ENCODE measurements at regions of chr3 and their contacts with region 1.

Region 1: DNA sequence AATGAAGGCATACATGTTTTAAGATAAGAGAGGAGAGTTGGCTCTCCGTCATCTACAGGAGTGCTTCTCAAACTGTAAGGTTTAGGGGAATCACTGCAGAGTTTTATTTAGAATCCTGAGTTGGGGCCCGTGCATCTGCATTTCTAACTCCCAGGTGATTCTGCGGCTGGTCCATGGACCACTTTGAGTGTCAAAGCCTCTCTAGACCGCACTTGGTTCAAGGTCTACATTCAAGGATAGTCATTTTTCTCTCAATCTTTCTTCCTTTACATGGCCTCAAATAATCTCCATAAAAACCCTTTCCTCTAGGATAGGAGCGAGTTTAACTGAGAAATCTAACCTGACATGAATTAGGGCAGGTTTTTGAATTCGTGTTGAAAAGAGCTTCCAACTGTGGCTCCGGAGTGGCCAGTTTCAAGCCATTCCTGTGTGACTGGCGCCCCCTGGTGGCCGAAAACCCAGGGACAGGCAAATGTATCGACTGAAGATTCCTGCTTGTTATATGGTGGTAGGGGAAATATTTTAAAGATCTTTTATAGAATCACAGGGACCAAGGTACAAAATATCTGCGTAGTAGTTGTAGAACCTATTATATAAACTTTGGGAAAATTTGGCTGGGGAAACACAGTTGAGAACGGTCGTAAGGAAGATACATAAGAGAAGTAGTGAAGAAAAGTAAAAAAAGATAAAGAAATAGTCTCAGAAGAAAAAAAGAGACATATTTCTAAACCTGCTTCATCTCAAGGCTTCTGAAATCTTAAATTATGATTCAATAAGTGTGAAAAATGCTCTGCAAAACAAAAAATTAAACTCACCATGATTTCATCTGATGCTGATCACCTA is 11.9 kb downstream of the GABRR3 start:
- DNase-seq: peak; percentile 96
- ATAC-seq: peak; percentile 89
- H3K4me3 Mint-ChIP-seq: no peak overlapping the region
- H3K27ac Mint-ChIP-seq: no peak overlapping the region
- H3K4me1 Mint-ChIP-seq: peaks cover 1% of the 10 kb centered on the region
- H3K27me3 Mint-ChIP-seq: peaks cover 3% of the 10 kb centered on the region
- CTCF ChIP-seq: peak; percentile 91

Region 2: DNA sequence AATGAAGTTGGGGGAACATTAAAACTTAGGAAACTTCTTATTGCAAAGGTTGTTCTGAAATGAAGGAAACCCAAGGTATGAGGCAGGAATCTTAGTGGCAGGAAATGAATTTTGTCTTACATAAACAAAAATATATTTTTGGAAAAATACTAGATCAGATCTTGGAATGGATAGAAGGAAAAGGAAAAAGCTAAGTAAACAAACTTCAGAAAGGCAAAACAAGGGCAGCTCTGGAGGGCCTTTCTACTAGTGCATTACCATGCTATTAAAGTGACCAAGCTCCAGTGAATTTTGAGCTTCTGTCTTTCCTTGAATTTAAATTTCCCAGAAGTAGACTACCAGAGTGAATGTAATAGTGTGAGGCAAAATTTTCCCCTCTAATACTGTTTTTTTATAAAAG is 245.0 kb before region 1 on chr3:
- CTCF ChIA-PET with region 1: interaction called, 3 read pairs
- POLR2A ChIA-PET with region 1: no interaction called
- intact Hi-C with region 1: loop called (anchors 5 kb)
- DNase-seq: no peak
- ATAC-seq: no peak
- H3K4me3 Mint-ChIP-seq: no peak overlapping the region
- H3K27ac Mint-ChIP-seq: no peak overlapping the region
- H3K4me1 Mint-ChIP-seq: no peaks in the 10 kb centered on the region
- H3K27me3 Mint-ChIP-seq: no peaks in the 10 kb centered on the region
- CTCF ChIP-seq: no peak

Region 3: DNA sequence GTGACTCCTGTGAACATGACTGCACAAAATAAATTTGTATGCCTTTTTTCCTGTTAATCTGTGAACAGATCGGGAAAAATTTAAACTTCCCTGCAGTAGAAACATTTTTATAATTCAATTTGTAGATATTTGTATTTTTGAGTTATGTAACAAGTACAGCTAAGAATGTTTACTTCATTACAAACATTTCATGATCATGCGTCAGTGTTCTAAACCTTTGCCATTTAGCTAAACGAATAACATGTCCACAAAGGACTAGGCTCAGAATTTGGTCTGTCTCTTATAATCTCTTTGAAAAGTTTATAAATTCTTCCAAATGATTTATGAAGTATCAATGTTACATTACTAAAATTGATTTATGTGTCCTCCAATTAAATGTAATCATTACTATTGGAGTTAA is 218.7 kb before region 1 on chr3:
- CTCF ChIA-PET with region 1: interaction called, 22 read pairs
- POLR2A ChIA-PET with region 1: interaction called, 4 read pairs
- intact Hi-C with region 1: no loop called
- DNase-seq: no peak
- ATAC-seq: no peak
- H3K4me3 Mint-ChIP-seq: no peak overlapping the region
- H3K27ac Mint-ChIP-seq: no peak overlapping the region
- H3K4me1 Mint-ChIP-seq: no peaks in the 10 kb centered on the region
- H3K27me3 Mint-ChIP-seq: no peaks in the 10 kb centered on the region
- CTCF ChIP-seq: no peak

Region 4: GRCh38 chr3:97942801-97943546 is 80.2 kb before region 1 on chr3:
- CTCF ChIA-PET with region 1: interaction called, 10 read pairs
- POLR2A ChIA-PET with region 1: no interaction called
- intact Hi-C with region 1: no loop called
- DNase-seq: no peak
- ATAC-seq: peak; percentile 42
- H3K4me3 Mint-ChIP-seq: no peak overlapping the region
- H3K27ac Mint-ChIP-seq: peak overlapping the region; percentile 46
- H3K4me1 Mint-ChIP-seq: peaks cover 6% of the 10 kb centered on the region
- H3K27me3 Mint-ChIP-seq: no peaks in the 10 kb centered on the region
- CTCF ChIP-seq: no peak

Region 5: GRCh38 chr3:97971677-97972567 is 51.3 kb before region 1 on chr3 and contains the start of gene RIOX2:
- CTCF ChIA-PET with region 1: interaction called, 44 read pairs
- POLR2A ChIA-PET with region 1: no interaction called
- intact Hi-C with region 1: loop called (anchors 5 kb)
- DNase-seq: peak; percentile 89
- ATAC-seq: peak; percentile 90
- H3K4me3 Mint-ChIP-seq: peak within 1 kb of the TSS; percentile 89
- H3K27ac Mint-ChIP-seq: peak within 1 kb of the TSS; percentile 96
- H3K4me1 Mint-ChIP-seq: peaks cover 53% of the 10 kb centered on the region
- H3K27me3 Mint-ChIP-seq: no peaks in the 10 kb centered on the region
- CTCF ChIP-seq: no peak
- total RNA-seq, gene RIOX2: 41.2 to 43.3 TPM

Region 6: GRCh38 chr3:98058244-98058960 is 35.2 kb after region 1 on chr3:
- CTCF ChIA-PET with region 1: no interaction called
- POLR2A ChIA-PET with region 1: no interaction called
- intact Hi-C with region 1: no loop called
- DNase-seq: no peak
- ATAC-seq: no peak
- H3K4me3 Mint-ChIP-seq: no peak overlapping the region
- H3K27ac Mint-ChIP-seq: no peak overlapping the region
- H3K4me1 Mint-ChIP-seq: no peaks in the 10 kb centered on the region
- H3K27me3 Mint-ChIP-seq: peaks cover 8% of the 10 kb centered on the region
- CTCF ChIP-seq: no peak

Region 7: GRCh38 chr3:98259707-98260106 is 236.5 kb after region 1 on chr3:
- CTCF ChIA-PET with region 1: no interaction called
- POLR2A ChIA-PET with region 1: no interaction called
- intact Hi-C with region 1: no loop called
- DNase-seq: no peak
- ATAC-seq: no peak
- H3K4me3 Mint-ChIP-seq: no peak overlapping the region
- H3K27ac Mint-ChIP-seq: no peak overlapping the region
- H3K4me1 Mint-ChIP-seq: no peaks in the 10 kb centered on the region
- H3K27me3 Mint-ChIP-seq: peaks cover 4% of the 10 kb centered on the region
- CTCF ChIP-seq: no peak

Measured in activated CD8-positive, alpha-beta T cell treated with anti-CD3 and anti-CD28 coated beads for 36 hours (primary cell).